HCT116 (cell line): ENCODE measurements at regions of chr2 and their contacts with region 1.

Region 1: GRCh38 chr2:157349949-157350515 is 24.4 kb upstream of the ERMN start:
- DNase-seq: no peak
- ATAC-seq: no peak
- H3K4me3 ChIP-seq: no peak overlapping the region
- H3K27ac ChIP-seq: no peak overlapping the region
- H3K4me1 ChIP-seq: peaks cover 0 to 5% of the 10 kb centered on the region in 2 experiments; a peak in 2 of 4 replicates
- H3K27me3 ChIP-seq: no peaks in the 10 kb centered on the region
- CTCF ChIP-seq: no peak
- POLR2A ChIP-seq: no peak
- RAD21 ChIP-seq: no peak

Region 2: GRCh38 chr2:156745619-156746018 is 604.4 kb before region 1 on chr2:
- CTCF ChIA-PET with region 1: no interaction called
- POLR2A ChIA-PET with region 1: no interaction called
- RAD21 ChIA-PET with region 1: no interaction called
- intact Hi-C with region 1: no loop called
- DNase-seq: no peak
- ATAC-seq: no peak
- H3K4me3 ChIP-seq: no peak overlapping the region
- H3K27ac ChIP-seq: no peak overlapping the region
- H3K4me1 ChIP-seq: no peaks in the 10 kb centered on the region
- H3K27me3 ChIP-seq: no peaks in the 10 kb centered on the region
- CTCF ChIP-seq: no peak
- POLR2A ChIP-seq: no peak
- RAD21 ChIP-seq: no peak

Region 3: GRCh38 chr2:157336137-157337010 is 13.7 kb before region 1 on chr2:
- CTCF ChIA-PET with region 1: interaction called, 22 read pairs
- POLR2A ChIA-PET with region 1: no interaction called
- RAD21 ChIA-PET with region 1: no interaction called
- intact Hi-C with region 1: no loop called
- DNase-seq: peak; percentile 39
- ATAC-seq: peak; percentile 98
- H3K4me3 ChIP-seq: no peak overlapping the region
- H3K27ac ChIP-seq: no peak overlapping the region
- H3K4me1 ChIP-seq: peaks cover 0 to 4% of the 10 kb centered on the region in 2 experiments; a peak in 1 of 4 replicates
- H3K27me3 ChIP-seq: no peaks in the 10 kb centered on the region
- CTCF ChIP-seq: peak; percentile 31 to 85 (median 69); a peak in 5 of 6 replicates
- POLR2A ChIP-seq: no peak
- RAD21 ChIP-seq: peak; percentile 39; the same call in 1 of the 2 replicates

Region 4: DNA sequence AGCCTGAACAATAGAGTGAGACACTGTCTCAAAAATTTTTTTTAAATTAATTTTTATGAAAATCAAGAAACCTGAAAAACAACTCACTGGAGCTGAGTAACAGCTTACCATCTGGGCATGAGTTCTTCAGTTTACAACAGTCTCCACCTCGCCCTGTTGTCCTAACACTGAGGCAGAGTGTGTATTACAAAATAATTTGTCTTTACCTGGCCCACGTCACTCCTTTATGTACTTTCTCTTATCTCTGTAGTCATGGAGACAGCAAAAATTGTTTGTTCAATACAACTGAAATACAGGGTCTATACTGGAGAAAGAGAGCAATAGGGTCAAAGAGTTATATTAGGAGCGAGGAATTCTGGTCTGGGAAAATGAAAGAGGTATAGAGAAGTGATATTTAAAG is 45.8 kb after region 1 on chr2:
- CTCF ChIA-PET with region 1: no interaction called
- POLR2A ChIA-PET with region 1: no interaction called
- RAD21 ChIA-PET with region 1: no interaction called
- intact Hi-C with region 1: no loop called
- DNase-seq: no peak
- ATAC-seq: no peak
- H3K4me3 ChIP-seq: no peak overlapping the region
- H3K27ac ChIP-seq: no peak overlapping the region
- H3K4me1 ChIP-seq: no peaks in the 10 kb centered on the region
- H3K27me3 ChIP-seq: no peaks in the 10 kb centered on the region
- CTCF ChIP-seq: no peak
- POLR2A ChIP-seq: no peak
- RAD21 ChIP-seq: no peak